ENCODE measurements at regions of chr5 and their contacts with region 1.

Region 1: GRCh38 chr5:56909294-56910209 is at the start of gene SETD9:
- DNase-seq: peak; percentile 97 to 99
- H3K4me3 ChIP-seq: peak within 1 kb of the TSS; percentile 85
- H3K4me3 Mint-ChIP-seq: peak within 1 kb of the TSS; percentile 96
- H3K27ac Mint-ChIP-seq: peak within 1 kb of the TSS; percentile 94
- H3K4me1 ChIP-seq: no peaks in the 10 kb centered on the region
- H3K4me1 Mint-ChIP-seq: no peaks in the 10 kb centered on the region
- H3K27me3 ChIP-seq: no peaks in the 10 kb centered on the region
- H3K27me3 Mint-ChIP-seq: no peaks in the 10 kb centered on the region
- CTCF ChIP-seq: no peak
- total RNA-seq, gene SETD9: 10.5 and 13.1 TPM in 2 replicates

Region 2: GRCh38 chr5:56501781-56502557 is 407.6 kb before region 1 on chr5:
- CTCF ChIA-PET with region 1: no interaction called
- POLR2A ChIA-PET with region 1: no interaction called
- intact Hi-C with region 1: no loop called
- DNase-seq: no peak
- H3K4me3 ChIP-seq: no peak overlapping the region
- H3K4me3 Mint-ChIP-seq: no peak overlapping the region
- H3K27ac Mint-ChIP-seq: no peak overlapping the region
- H3K4me1 ChIP-seq: peaks cover 42% of the 10 kb centered on the region
- H3K4me1 Mint-ChIP-seq: peaks cover 20% of the 10 kb centered on the region
- H3K27me3 ChIP-seq: no peaks in the 10 kb centered on the region
- H3K27me3 Mint-ChIP-seq: no peaks in the 10 kb centered on the region
- CTCF ChIP-seq: no peak

Region 3: DNA sequence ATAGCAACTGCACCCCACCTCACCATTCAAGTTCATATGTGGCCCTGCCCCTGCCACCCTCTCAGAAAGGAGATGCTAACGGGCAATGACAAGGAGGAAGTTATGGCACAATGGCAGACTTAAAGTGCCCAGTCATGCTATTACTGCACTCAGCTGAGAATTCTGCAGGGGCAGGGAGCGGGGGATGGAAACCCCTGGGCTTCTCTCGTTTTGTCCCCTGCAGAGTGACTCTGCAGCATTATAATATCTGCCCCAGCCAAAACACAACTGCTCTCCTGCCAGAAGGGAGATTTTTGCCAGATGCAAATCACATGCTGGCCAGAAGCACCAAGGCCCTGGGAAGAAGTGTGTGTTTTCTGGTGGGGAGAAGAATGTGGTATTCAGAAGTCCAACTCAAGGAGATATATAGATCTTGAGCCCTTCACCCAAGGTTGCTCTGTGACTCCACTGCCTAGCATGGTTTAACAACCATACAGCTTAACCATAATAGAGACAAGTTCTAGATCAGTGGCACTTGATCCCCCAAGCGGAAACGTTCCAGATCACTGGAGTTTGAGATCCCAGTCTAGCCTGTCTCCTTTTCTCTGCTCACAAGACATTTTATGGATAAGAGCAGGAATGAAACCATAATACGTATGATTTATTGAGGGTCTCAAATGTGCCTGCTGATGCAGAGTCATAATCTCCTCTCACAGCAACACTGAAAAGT is 301.2 kb before region 1 on chr5:
- CTCF ChIA-PET with region 1: no interaction called
- POLR2A ChIA-PET with region 1: no interaction called
- intact Hi-C with region 1: no loop called
- DNase-seq: no peak
- H3K4me3 ChIP-seq: no peak overlapping the region
- H3K4me3 Mint-ChIP-seq: no peak overlapping the region
- H3K27ac Mint-ChIP-seq: peak overlapping the region; percentile 48
- H3K4me1 ChIP-seq: peaks cover 17% of the 10 kb centered on the region; the same call in 1 of the 2 replicates
- H3K4me1 Mint-ChIP-seq: peaks cover 18% of the 10 kb centered on the region
- H3K27me3 ChIP-seq: no peaks in the 10 kb centered on the region
- H3K27me3 Mint-ChIP-seq: no peaks in the 10 kb centered on the region
- CTCF ChIP-seq: no peak

Region 4: GRCh38 chr5:56852228-56853000 is 57.1 kb before region 1 on chr5:
- CTCF ChIA-PET with region 1: no interaction called
- POLR2A ChIA-PET with region 1: no interaction called
- intact Hi-C with region 1: no loop called
- DNase-seq: no peak
- H3K4me3 ChIP-seq: no peak overlapping the region
- H3K4me3 Mint-ChIP-seq: no peak overlapping the region
- H3K27ac Mint-ChIP-seq: peak overlapping the region; percentile 8
- H3K4me1 ChIP-seq: peaks cover 45% of the 10 kb centered on the region
- H3K4me1 Mint-ChIP-seq: peaks cover 35% of the 10 kb centered on the region
- H3K27me3 ChIP-seq: no peaks in the 10 kb centered on the region
- H3K27me3 Mint-ChIP-seq: no peaks in the 10 kb centered on the region
- CTCF ChIP-seq: no peak

Region 5: GRCh38 chr5:57102189-57102904 is 192.8 kb after region 1 on chr5:
- CTCF ChIA-PET with region 1: no interaction called
- POLR2A ChIA-PET with region 1: no interaction called
- intact Hi-C with region 1: no loop called
- DNase-seq: no peak
- H3K4me3 ChIP-seq: no peak overlapping the region
- H3K4me3 Mint-ChIP-seq: no peak overlapping the region
- H3K27ac Mint-ChIP-seq: no peak overlapping the region
- H3K4me1 ChIP-seq: peaks cover 15% of the 10 kb centered on the region
- H3K4me1 Mint-ChIP-seq: peaks cover 14% of the 10 kb centered on the region
- H3K27me3 ChIP-seq: no peaks in the 10 kb centered on the region
- H3K27me3 Mint-ChIP-seq: no peaks in the 10 kb centered on the region
- CTCF ChIP-seq: no peak

Region 6: DNA sequence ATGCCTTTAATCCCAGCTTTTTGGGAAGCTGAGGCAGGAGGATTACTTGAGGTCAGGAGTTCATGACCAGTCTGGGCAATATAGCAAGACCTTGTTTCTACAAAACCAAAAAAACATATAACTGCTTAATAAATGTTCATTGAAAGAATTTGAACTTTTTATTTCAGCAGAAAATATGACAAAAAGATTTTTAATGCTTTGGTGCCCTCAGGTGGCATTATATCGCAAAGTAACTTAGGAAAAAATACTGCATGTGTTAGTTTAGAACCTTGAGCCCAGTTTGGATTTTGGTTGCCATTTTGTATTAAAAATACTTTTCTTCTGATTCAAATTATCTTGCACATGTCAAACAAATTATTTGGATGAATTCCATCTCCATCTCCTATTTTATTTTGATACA is 367.5 kb after region 1 on chr5:
- CTCF ChIA-PET with region 1: no interaction called
- POLR2A ChIA-PET with region 1: no interaction called
- intact Hi-C with region 1: loop called (anchors 5 kb)
- DNase-seq: no peak
- H3K4me3 ChIP-seq: no peak overlapping the region
- H3K4me3 Mint-ChIP-seq: no peak overlapping the region
- H3K27ac Mint-ChIP-seq: no peak overlapping the region
- H3K4me1 ChIP-seq: no peaks in the 10 kb centered on the region
- H3K4me1 Mint-ChIP-seq: no peaks in the 10 kb centered on the region
- H3K27me3 ChIP-seq: no peaks in the 10 kb centered on the region
- H3K27me3 Mint-ChIP-seq: no peaks in the 10 kb centered on the region
- CTCF ChIP-seq: peak in 1 of 2 experiments; percentile 26

Measured in Caco-2 (cell line).